ENCODE measurements at regions of chr1 and their contacts with region 1.

Region 1: GRCh38 chr1:167553136-167554027 is at the start of gene CREG1:
- DNase-seq: peak; percentile 92
- ATAC-seq: peak; percentile 98
- H3K4me3 ChIP-seq: peak within 1 kb of the TSS; percentile 56 to 82 (median 68)
- H3K4me3 Mint-ChIP-seq: peak within 1 kb of the TSS; percentile 96
- H3K27ac ChIP-seq: no peak within 1 kb of the TSS
- H3K27ac Mint-ChIP-seq: peak within 1 kb of the TSS; percentile 82
- H3K4me1 ChIP-seq: peaks cover 10 to 23% of the 10 kb centered on the region in 2 donors
- H3K4me1 Mint-ChIP-seq: peaks cover 23% of the 10 kb centered on the region
- H3K27me3 ChIP-seq: no peaks in the 10 kb centered on the region
- H3K27me3 Mint-ChIP-seq: no peaks in the 10 kb centered on the region
- CTCF ChIP-seq: no peak
- total RNA-seq, gene CREG1: 8.1 and 8.4 TPM in 2 replicates

Region 2: DNA sequence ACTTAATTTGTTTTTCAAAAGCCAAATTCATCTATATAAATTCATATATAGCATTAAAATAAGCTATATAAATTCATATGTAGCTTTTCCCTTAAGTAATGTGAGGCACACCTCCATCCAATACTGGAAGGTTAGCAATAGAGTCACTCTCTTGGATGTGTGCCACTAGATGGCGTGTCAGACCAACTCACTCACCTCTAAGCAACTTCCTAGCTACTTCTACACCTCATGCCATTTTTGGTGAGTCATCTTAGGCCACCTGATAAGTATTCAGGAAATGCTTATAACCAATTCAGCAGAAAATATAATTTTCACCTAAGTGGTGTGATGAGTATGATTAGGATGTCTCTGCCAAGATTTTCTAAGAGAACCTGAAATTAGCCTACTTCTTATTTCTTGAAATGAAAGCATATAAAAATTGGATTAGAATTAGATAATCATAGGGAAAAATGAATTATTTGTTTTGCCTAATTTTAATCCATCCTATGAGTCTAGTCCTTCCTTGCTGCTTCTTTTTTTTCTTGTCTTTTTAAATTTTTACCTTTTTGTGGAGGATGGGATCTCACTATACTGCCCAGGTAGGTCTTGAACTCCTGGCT is 642.9 kb before region 1 on chr1:
- CTCF ChIA-PET with region 1: interaction called, 3 read pairs
- POLR2A ChIA-PET with region 1: no interaction called
- intact Hi-C with region 1: loop called (anchors 10 kb)
- DNase-seq: peak; percentile 87
- ATAC-seq: peak; percentile 97
- H3K4me3 ChIP-seq: no peak overlapping the region
- H3K4me3 Mint-ChIP-seq: no peak overlapping the region
- H3K27ac ChIP-seq: no peak overlapping the region
- H3K27ac Mint-ChIP-seq: no peak overlapping the region
- H3K4me1 ChIP-seq: peaks cover 6 to 8% of the 10 kb centered on the region in 2 donors
- H3K4me1 Mint-ChIP-seq: peaks cover 6% of the 10 kb centered on the region
- H3K27me3 ChIP-seq: no peaks in the 10 kb centered on the region
- H3K27me3 Mint-ChIP-seq: no peaks in the 10 kb centered on the region
- CTCF ChIP-seq: peak; percentile 96

Region 3: GRCh38 chr1:167401260-167401873 is 152.0 kb before region 1 on chr1:
- CTCF ChIA-PET with region 1: interaction called, 13 read pairs
- POLR2A ChIA-PET with region 1: no interaction called
- intact Hi-C with region 1: loop called (anchors 1 kb)
- DNase-seq: peak; percentile 70
- ATAC-seq: peak; percentile 76
- H3K4me3 ChIP-seq: no peak overlapping the region
- H3K4me3 Mint-ChIP-seq: no peak overlapping the region
- H3K27ac ChIP-seq: no peak overlapping the region
- H3K27ac Mint-ChIP-seq: peak overlapping the region; percentile 18
- H3K4me1 ChIP-seq: no peaks in the 10 kb centered on the region
- H3K4me1 Mint-ChIP-seq: no peaks in the 10 kb centered on the region
- H3K27me3 ChIP-seq: no peaks in the 10 kb centered on the region
- H3K27me3 Mint-ChIP-seq: no peaks in the 10 kb centered on the region
- CTCF ChIP-seq: peak; percentile 82

Region 4: GRCh38 chr1:167420510-167420909 is 132.9 kb before region 1 on chr1:
- CTCF ChIA-PET with region 1: no interaction called
- POLR2A ChIA-PET with region 1: no interaction called
- intact Hi-C with region 1: no loop called
- DNase-seq: no peak
- ATAC-seq: no peak
- H3K4me3 ChIP-seq: no peak overlapping the region
- H3K4me3 Mint-ChIP-seq: no peak overlapping the region
- H3K27ac ChIP-seq: no peak overlapping the region
- H3K27ac Mint-ChIP-seq: no peak overlapping the region
- H3K4me1 ChIP-seq: peaks cover 7 to 13% of the 10 kb centered on the region in 2 donors
- H3K4me1 Mint-ChIP-seq: peaks cover 18% of the 10 kb centered on the region
- H3K27me3 ChIP-seq: no peaks in the 10 kb centered on the region
- H3K27me3 Mint-ChIP-seq: no peaks in the 10 kb centered on the region
- CTCF ChIP-seq: no peak

Region 5: GRCh38 chr1:167542109-167543032 is 11.0 kb before region 1 on chr1:
- CTCF ChIA-PET with region 1: interaction called, 14 read pairs
- POLR2A ChIA-PET with region 1: no interaction called
- intact Hi-C with region 1: no loop called
- DNase-seq: no peak
- ATAC-seq: no peak
- H3K4me3 ChIP-seq: no peak overlapping the region
- H3K4me3 Mint-ChIP-seq: no peak overlapping the region
- H3K27ac ChIP-seq: no peak overlapping the region
- H3K27ac Mint-ChIP-seq: no peak overlapping the region
- H3K4me1 ChIP-seq: peaks cover 3% of the 10 kb centered on the region in 2 donors
- H3K4me1 Mint-ChIP-seq: peaks cover 13% of the 10 kb centered on the region
- H3K27me3 ChIP-seq: no peaks in the 10 kb centered on the region
- H3K27me3 Mint-ChIP-seq: no peaks in the 10 kb centered on the region
- CTCF ChIP-seq: no peak

Region 6: GRCh38 chr1:167803358-167804207 is 250.2 kb after region 1 on chr1:
- CTCF ChIA-PET with region 1: interaction called, 4 read pairs
- POLR2A ChIA-PET with region 1: no interaction called
- intact Hi-C with region 1: loop called (anchors 1 kb)
- DNase-seq: peak; percentile 92
- ATAC-seq: peak; percentile 98
- H3K4me3 ChIP-seq: no peak overlapping the region
- H3K4me3 Mint-ChIP-seq: peak overlapping the region; percentile 18
- H3K27ac ChIP-seq: no peak overlapping the region
- H3K27ac Mint-ChIP-seq: peak overlapping the region; percentile 6
- H3K4me1 ChIP-seq: peaks cover 13 to 16% of the 10 kb centered on the region in 2 donors
- H3K4me1 Mint-ChIP-seq: peaks cover 23% of the 10 kb centered on the region
- H3K27me3 ChIP-seq: no peaks in the 10 kb centered on the region
- H3K27me3 Mint-ChIP-seq: no peaks in the 10 kb centered on the region
- CTCF ChIP-seq: peak; percentile 93

Measured in B cell (primary cell).